MCF 10A (cell line): ENCODE measurements at regions of chr1 and their contacts with region 1.

Region 1: DNA sequence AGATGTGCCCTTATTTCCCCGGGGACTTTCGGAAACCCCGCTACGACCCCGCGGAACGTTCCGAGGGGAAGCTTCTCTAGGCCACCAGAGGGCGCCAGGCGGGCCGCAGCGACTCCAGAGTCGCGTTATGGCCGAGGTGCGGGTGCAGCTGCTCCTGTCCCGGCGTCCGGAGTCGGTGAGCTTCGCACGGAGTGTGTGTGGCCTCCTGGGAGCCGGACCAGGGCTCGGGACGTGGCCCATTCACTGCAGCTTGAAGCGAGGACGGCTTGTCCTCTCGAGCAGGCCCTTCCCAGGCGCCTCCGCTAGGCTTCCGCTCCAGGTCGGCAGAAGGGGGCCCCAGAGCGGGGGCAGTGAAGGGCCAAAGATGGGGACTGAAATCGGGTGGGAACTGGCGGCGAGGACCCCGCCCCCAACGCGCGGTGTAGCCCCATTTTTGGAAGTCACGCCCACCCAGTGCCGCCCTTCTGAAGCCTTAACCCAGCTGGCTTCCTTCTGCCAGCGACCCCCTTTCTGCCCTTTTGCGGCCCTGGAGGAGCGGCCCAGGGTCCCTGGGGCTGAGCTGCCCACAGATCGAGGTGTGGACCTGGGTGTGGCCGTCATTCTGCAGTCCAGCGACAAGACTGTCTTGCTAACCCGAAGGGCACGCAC is at the start of gene NUDT17:
- DNase-seq: peak; percentile 81
- H3K4me3 Mint-ChIP-seq: no peak within 1 kb of the TSS
- H3K27ac Mint-ChIP-seq: peak within 1 kb of the TSS; percentile 67
- H3K4me1 Mint-ChIP-seq: peaks cover 12% of the 10 kb centered on the region
- H3K27me3 Mint-ChIP-seq: no peaks in the 10 kb centered on the region
- CTCF ChIP-seq: peak; percentile 100
- total RNA-seq, gene NUDT17: 3.7 and 4.6 TPM in 2 replicates

Region 2: DNA sequence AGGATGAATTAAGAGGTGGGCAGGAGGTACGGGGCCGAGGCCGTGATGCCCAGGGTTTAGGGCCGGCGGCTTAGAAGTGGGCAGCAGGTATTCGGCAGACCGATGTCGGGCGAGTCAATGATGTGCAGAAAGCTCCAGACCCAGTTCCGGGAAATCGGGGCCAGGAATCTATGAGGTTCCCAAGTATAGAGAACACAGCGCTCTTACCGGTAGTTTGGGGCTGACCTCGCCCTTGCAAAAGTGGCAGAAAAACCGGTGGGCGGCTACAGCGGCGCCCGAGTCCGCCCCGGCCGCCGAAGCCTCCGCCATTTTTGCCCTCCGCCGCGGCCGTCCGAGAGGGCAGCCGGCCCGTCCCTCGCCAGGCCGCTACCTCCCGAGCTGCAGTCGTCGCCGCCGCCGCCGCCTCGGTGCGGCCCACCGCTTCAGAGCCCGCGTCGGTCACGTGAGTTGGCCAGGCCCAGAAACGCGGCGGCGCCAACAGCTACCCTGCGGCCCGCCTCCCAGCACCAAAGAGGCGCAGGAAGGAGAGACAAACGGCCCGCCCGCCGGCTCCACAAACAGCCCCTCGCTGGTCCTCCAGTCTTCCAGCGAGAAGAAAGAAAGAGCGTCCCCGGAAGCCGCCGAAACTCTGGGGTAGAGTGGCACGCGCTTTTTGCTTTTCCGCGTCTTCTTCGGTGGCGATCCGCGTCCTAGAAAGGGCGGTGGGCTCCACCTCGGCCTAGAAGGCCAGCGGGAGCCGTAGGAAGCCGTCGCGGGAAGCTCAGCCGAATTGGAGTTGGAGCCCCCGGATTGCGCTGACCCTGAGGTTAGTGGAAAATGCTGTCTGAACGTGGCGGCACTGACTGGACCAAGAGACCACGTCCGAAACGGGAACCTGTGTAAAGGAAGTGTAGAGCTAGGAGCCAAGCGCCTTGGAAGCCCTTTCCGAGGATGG is 21.8 kb before region 1 on chr1 and contains the starts of genes POLR3C and RNF115:
- CTCF ChIA-PET with region 1: interaction called, 242 read pairs
- POLR2A ChIA-PET with region 1: interaction called, 48 read pairs
- intact Hi-C with region 1: no loop called
- DNase-seq: peak; percentile 95
- H3K4me3 Mint-ChIP-seq: peak within 1 kb of the TSS; percentile 90
- H3K27ac Mint-ChIP-seq: peak within 1 kb of the TSS; percentile 94
- H3K4me1 Mint-ChIP-seq: peaks cover 6% of the 10 kb centered on the region
- H3K27me3 Mint-ChIP-seq: no peaks in the 10 kb centered on the region
- CTCF ChIP-seq: no peak
- total RNA-seq, gene POLR3C: 67.9 and 96.8 TPM in 2 replicates
- total RNA-seq, gene RNF115: 16.8 and 19.5 TPM in 2 replicates

Region 3: DNA sequence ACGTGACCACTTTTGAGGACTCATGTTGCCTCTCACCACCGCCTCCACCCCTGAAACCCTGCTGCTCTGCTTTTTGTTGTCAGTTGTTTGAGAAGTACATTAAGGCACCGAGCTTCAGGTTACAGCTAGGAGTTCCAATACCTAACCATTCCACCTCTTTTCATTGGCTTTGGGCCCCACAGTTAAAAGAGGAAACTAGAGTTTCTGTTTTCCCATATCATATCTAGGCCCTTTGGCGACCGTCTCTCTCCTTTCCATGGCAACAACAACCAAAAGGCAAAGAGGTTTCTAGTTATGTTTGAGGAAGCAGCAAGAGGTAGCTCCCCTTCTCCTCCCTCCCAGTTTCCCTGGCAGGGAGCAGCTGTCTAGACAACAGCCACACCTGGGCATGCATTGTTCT is 34.1 kb after region 1 on chr1:
- CTCF ChIA-PET with region 1: interaction called, 46 read pairs
- POLR2A ChIA-PET with region 1: interaction called, 3 read pairs
- intact Hi-C with region 1: no loop called
- DNase-seq: no peak
- H3K4me3 Mint-ChIP-seq: no peak overlapping the region
- H3K27ac Mint-ChIP-seq: no peak overlapping the region
- H3K4me1 Mint-ChIP-seq: peaks cover 28% of the 10 kb centered on the region
- H3K27me3 Mint-ChIP-seq: peaks cover 2% of the 10 kb centered on the region
- CTCF ChIP-seq: no peak

Region 4: GRCh38 chr1:145906954-145907753 is 61.5 kb after region 1 on chr1:
- CTCF ChIA-PET with region 1: interaction called, 61 read pairs
- POLR2A ChIA-PET with region 1: interaction called, 6 read pairs
- intact Hi-C with region 1: loop called (anchors 1 kb)
- DNase-seq: no peak
- H3K4me3 Mint-ChIP-seq: no peak overlapping the region
- H3K27ac Mint-ChIP-seq: peak overlapping the region; percentile 57
- H3K4me1 Mint-ChIP-seq: peaks cover 24% of the 10 kb centered on the region
- H3K27me3 Mint-ChIP-seq: no peaks in the 10 kb centered on the region
- CTCF ChIP-seq: no peak

Region 5: GRCh38 chr1:145978854-145979759 is 133.5 kb after region 1 on chr1:
- CTCF ChIA-PET with region 1: interaction called, 11 read pairs
- POLR2A ChIA-PET with region 1: interaction called, 4 read pairs
- intact Hi-C with region 1: loop called (anchors 10 kb)
- DNase-seq: peak; percentile 100
- H3K4me3 Mint-ChIP-seq: no peak overlapping the region
- H3K27ac Mint-ChIP-seq: no peak overlapping the region
- H3K4me1 Mint-ChIP-seq: peaks cover 11% of the 10 kb centered on the region
- H3K27me3 Mint-ChIP-seq: no peaks in the 10 kb centered on the region
- CTCF ChIP-seq: peak; percentile 18

Region 6: GRCh38 chr1:146012737-146013403 is 167.2 kb after region 1 on chr1:
- CTCF ChIA-PET with region 1: interaction called, 41 read pairs
- POLR2A ChIA-PET with region 1: interaction called, 7 read pairs
- intact Hi-C with region 1: loop called (anchors 1 kb)
- DNase-seq: peak; percentile 87
- H3K4me3 Mint-ChIP-seq: no peak overlapping the region
- H3K27ac Mint-ChIP-seq: no peak overlapping the region
- H3K4me1 Mint-ChIP-seq: peaks cover 9% of the 10 kb centered on the region
- H3K27me3 Mint-ChIP-seq: no peaks in the 10 kb centered on the region
- CTCF ChIP-seq: peak; percentile 89